ENCODE measurements at regions of chr17 and their contacts with region 1.

Region 1: DNA sequence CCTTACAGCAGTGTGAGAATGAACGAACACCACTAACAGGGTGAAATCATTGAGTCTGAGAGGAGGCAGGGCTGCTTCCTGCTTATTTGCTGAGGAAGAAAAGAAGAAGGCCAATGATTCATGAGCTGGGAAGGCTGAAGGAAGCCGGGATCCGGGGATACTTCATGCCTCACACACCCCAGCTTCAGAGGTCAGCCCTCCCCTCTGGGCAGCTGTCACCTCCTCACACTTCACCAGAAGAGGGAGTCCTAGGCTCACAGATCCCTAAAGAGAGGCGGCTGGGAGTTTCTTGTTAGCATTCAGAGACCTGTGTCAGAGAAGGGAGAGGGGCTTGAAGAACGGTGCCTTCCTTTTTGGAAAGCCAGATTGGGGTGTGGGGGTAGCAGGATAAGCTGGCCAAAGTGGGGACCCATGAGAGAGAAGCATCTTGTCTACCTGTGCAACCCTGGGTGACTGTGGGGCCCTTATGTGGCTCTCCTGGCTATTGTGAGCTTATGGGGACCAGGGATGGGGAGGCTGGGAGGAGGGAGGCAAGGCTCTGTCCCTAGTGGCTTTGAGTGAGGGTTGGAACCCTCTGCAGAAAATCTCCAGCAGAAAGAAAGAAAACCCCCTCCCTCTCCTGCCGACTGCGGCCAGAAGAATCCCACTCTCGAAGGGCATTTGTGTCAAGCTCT is 94.6 kb downstream of the RGS9 start:
- DNase-seq: peak; percentile 63
- H3K4me3 ChIP-seq: no peak overlapping the region
- H3K27ac ChIP-seq: no peak overlapping the region
- H3K27me3 ChIP-seq: peaks cover 14% of the 10 kb centered on the region
- CTCF ChIP-seq: peak; percentile 80

Region 2: GRCh38 chr17:65177901-65178300 is 53.9 kb before region 1 on chr17:
- CTCF ChIA-PET with region 1: no interaction called
- POLR2A ChIA-PET with region 1: no interaction called
- DNase-seq: no peak
- H3K4me3 ChIP-seq: no peak overlapping the region
- H3K27ac ChIP-seq: no peak overlapping the region
- H3K27me3 ChIP-seq: no peaks in the 10 kb centered on the region
- CTCF ChIP-seq: no peak

Region 3: GRCh38 chr17:65556014-65556909 is 324.5 kb after region 1 on chr17:
- CTCF ChIA-PET with region 1: interaction called, 18 read pairs
- POLR2A ChIA-PET with region 1: no interaction called
- DNase-seq: no peak
- H3K4me3 ChIP-seq: no peak overlapping the region
- H3K27ac ChIP-seq: peak overlapping the region; percentile 21
- H3K27me3 ChIP-seq: peaks cover 11% of the 10 kb centered on the region
- CTCF ChIP-seq: peak; percentile 76

Region 4: DNA sequence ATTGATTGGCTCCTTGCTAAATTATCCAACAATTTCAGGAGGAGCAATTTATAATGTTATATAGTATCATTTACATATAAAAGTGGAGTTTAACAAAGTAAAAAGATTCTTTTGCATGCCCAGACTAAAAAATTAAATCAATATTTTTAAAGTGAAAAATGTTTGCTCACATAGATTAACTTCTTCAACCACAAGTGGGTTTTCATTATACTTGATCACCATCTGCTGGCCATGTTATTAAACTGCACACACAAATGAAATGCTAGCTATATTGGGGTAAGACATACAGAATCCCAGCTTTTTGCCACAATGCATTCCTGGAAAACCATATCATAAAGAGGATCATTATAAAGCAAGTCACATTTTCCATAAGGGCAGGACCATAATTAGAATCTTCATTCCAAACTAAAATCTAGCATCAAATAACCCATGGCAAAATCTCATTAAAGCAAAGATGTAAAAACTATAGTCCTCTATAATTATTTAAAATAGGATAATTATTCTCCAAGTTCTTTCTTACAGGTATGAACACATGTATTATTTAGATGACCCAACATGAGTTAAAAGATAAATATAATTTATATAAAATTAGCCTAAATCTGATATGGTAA is 933.8 kb after region 1 on chr17:
- CTCF ChIA-PET with region 1: interaction called, 42 read pairs
- POLR2A ChIA-PET with region 1: interaction called, 4 read pairs
- DNase-seq: peak; percentile 32
- H3K4me3 ChIP-seq: no peak overlapping the region
- H3K27ac ChIP-seq: no peak overlapping the region
- H3K27me3 ChIP-seq: no peaks in the 10 kb centered on the region
- CTCF ChIP-seq: peak; percentile 68

Region 5: GRCh38 chr17:66191593-66192382 is 960.0 kb after region 1 on chr17 and contains the start of gene CEP112:
- CTCF ChIA-PET with region 1: interaction called, 15 read pairs
- POLR2A ChIA-PET with region 1: no interaction called
- DNase-seq: no peak
- H3K4me3 ChIP-seq: peak within 1 kb of the TSS; percentile 66
- H3K27ac ChIP-seq: peak within 1 kb of the TSS; percentile 47
- H3K27me3 ChIP-seq: no peaks in the 10 kb centered on the region
- CTCF ChIP-seq: no peak
- polyA plus RNA-seq, gene CEP112: 5.7 and 6.3 TPM in 2 replicates

Measured in AG04450 (cell line).